Right lobe of liver (tissue), 6 donors: ENCODE measurements at regions of chr5 and their contacts with region 1.

Region 1: GRCh38 chr5:50962934-50963872 is 296.8 kb downstream of the PARP8 start:
- DNase-seq: peak; percentile 60 to 76 (median 71)
- ATAC-seq: peak; percentile 93 to 97 (median 96)
- H3K4me3 ChIP-seq: peak overlapping the region; percentile 13 to 46 (median 33)
- H3K27ac ChIP-seq: no peak overlapping the region
- H3K4me1 ChIP-seq: peaks cover 0 to 22% (median 3%) of the 10 kb centered on the region in 4 donors
- H3K27me3 ChIP-seq: peaks cover 0 to 28% of the 10 kb centered on the region in 2 donors
- CTCF ChIP-seq: peak; percentile 92 to 94 (median 92)
- POLR2A ChIP-seq: no peak

Region 2: DNA sequence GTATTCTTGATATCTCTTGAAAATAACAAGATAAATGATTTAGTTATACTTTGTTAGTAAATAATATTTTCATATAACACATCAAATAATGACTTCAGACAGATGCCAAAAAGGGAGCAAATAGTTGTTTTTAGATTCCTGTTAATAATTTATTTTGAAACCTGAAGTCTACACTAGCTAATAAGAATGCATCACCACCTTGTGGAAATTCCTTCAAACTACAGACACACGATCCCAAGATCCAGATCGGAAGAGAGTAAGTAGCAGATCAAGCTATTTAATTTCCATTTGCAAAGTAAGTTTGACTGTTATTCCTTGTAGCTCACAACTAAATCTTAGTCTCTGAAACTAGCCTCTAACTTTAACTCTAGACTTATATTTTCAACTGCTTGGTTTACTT is 384.5 kb after region 1 on chr5:
- intact Hi-C with region 1: no loop called
- DNase-seq: no peak
- ATAC-seq: peak in 1 of 4 donors; percentile 29
- H3K4me3 ChIP-seq: no peak overlapping the region
- H3K27ac ChIP-seq: no peak overlapping the region
- H3K4me1 ChIP-seq: no peaks in the 10 kb centered on the region
- H3K27me3 ChIP-seq: no peaks in the 10 kb centered on the region
- CTCF ChIP-seq: peak; percentile 11 to 36 (median 24)
- POLR2A ChIP-seq: no peak

Region 3: DNA sequence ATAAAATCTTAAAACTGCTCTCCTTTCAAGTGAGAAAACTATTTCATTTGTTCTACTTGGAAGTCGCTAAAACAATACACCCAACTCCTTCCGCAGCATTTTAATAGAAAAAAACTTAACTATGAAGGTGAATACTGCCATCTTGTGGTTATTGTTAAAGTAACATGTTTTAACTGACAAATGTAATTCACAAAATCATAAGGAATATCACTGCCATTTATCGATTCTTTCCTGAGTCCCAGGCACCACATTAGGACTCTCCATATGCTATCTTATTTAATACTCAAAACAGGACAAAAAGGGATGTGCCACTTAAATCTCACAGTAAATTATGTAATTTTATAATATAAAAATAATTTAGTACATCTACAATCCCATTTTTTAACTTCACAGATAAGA is 1694.0 kb after region 1 on chr5:
- intact Hi-C with region 1: loop called in 1 of 2 experiments (anchors 10 kb)
- DNase-seq: no peak
- ATAC-seq: peak; percentile 33 to 71 (median 60)
- H3K4me3 ChIP-seq: no peak overlapping the region
- H3K27ac ChIP-seq: no peak overlapping the region
- H3K4me1 ChIP-seq: no peaks in the 10 kb centered on the region
- H3K27me3 ChIP-seq: no peaks in the 10 kb centered on the region
- CTCF ChIP-seq: peak; percentile 48 to 58 (median 56)
- POLR2A ChIP-seq: no peak